ENCODE measurements at regions of chr7 and their contacts with region 1.

Region 1: GRCh38 chr7:26723129-26723528 is 141.3 kb downstream of the SKAP2 start:
- DNase-seq: no peak
- H3K4me3 ChIP-seq: no peak overlapping the region
- H3K4me3 Mint-ChIP-seq: no peak overlapping the region
- H3K27ac Mint-ChIP-seq: no peak overlapping the region
- H3K4me1 ChIP-seq: no peaks in the 10 kb centered on the region
- H3K4me1 Mint-ChIP-seq: no peaks in the 10 kb centered on the region
- H3K27me3 ChIP-seq: no peaks in the 10 kb centered on the region
- H3K27me3 Mint-ChIP-seq: no peaks in the 10 kb centered on the region
- CTCF ChIP-seq: no peak

Region 2: DNA sequence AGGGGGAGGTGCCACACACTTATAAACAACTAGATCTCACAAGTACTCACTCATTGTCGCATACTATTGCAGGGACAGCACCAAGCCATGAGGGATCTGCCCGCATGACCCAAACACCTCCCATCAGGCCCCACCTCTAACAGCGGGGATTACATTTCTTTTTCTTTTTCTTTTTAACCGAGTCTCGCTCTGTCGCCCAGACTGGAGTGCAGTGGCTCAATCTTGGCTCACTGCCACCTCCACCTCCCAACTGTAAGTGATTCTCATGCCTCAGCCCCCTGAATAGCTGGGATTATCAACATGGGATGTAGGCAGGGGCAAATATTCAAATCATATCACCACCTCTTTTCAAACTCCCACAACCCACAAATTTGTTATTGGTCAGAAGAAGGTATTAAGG is 64.6 kb after region 1 on chr7:
- CTCF ChIA-PET with region 1: no interaction called
- POLR2A ChIA-PET with region 1: no interaction called
- intact Hi-C with region 1: loop called (anchors 2 kb)
- DNase-seq: no peak
- H3K4me3 ChIP-seq: no peak overlapping the region
- H3K4me3 Mint-ChIP-seq: no peak overlapping the region
- H3K27ac Mint-ChIP-seq: no peak overlapping the region
- H3K4me1 ChIP-seq: no peaks in the 10 kb centered on the region
- H3K4me1 Mint-ChIP-seq: no peaks in the 10 kb centered on the region
- H3K27me3 ChIP-seq: no peaks in the 10 kb centered on the region
- H3K27me3 Mint-ChIP-seq: no peaks in the 10 kb centered on the region
- CTCF ChIP-seq: no peak